ENCODE measurements at regions of chr11 and their contacts with region 1.

Region 1: DNA sequence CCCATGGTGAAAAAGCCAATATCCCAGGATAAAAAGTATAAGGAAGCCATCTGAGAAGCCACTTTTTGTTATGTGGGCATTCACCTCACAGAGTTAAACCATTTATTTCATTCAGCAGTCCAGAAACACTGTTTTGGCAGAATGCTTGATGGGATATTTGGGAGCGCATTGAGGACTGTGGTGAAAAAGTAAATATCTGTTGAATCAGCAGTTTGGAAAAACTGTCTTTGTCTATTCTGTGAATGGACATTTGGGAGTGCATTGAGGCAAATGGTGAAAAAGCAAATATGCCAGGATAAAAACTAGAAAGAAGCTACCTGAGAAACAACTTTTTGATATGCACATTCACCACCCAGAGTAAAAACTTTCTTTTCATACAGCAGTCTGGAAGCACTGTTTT is 276.2 kb upstream of the TRIM48 start:
- DNase-seq: no peak
- H3K4me3 ChIP-seq: no peak overlapping the region
- H3K27ac ChIP-seq: no peak overlapping the region
- H3K4me1 ChIP-seq: no peaks in the 10 kb centered on the region
- H3K27me3 ChIP-seq: no peaks in the 10 kb centered on the region
- CTCF ChIP-seq: no peak
- POLR2A ChIP-seq: no peak

Region 2: DNA sequence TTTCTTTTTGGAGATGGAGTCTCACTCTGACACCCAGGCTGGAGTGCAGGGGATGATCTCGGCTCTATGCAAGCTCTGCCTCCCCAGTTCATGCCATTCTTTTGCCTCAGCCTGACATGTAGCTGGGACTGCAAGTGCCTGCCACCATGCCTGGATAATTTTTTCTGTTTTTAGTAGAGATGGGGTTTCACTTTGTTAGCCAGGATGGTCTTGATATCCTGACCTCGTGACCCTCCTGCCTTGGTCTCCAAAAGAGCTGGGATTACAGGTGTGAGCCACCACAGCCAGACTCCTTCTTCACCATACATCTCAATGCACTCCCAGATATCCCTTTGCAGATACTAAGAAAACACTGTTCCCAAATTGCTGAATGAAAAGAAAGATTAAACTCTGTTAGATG is 54.8 kb before region 1 on chr11:
- intact Hi-C with region 1: loop called (anchors 10 kb)
- DNase-seq: no peak
- H3K4me3 ChIP-seq: no peak overlapping the region
- H3K27ac ChIP-seq: no peak overlapping the region
- H3K4me1 ChIP-seq: no peaks in the 10 kb centered on the region
- H3K27me3 ChIP-seq: no peaks in the 10 kb centered on the region
- CTCF ChIP-seq: no peak
- POLR2A ChIP-seq: no peak